SK-N-SH (cell line): ENCODE measurements at regions of chr15 and their contacts with region 1.

Region 1: DNA sequence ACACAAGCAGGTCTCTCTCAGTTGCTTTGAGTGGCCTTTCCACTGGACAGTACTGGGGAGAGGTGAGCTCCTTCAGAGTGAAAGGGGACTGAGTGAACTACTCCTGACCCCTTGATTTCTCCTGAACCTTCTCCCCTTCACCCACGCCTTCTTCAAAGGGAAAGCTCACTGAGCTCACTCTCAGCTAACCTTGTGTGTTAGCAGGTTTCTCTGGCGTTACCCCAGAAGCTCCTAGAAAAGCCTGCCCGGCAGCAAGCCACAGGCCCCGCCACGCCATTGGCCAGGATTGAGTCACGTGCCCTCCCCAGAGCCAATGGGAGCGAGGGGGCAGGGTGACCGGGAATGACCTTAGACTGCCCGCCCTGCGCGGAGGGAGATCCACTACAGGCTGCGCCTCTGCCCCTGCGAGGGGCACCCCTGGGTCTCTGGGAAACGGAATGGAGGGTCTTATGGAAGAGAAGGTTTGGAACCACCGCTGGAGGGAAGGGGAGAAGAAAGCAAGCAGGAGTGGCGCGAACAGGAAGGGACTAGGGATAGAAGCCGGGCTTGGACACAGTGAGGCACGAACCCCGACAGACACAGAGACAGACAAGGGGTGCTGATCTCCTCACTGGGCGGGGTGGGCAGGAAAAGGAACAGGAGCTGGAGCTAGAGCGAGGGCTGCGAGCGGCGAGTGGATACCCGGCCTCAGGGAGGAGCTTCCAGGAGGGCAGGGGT is 17.4 kb upstream of the CLK3 start:
- DNase-seq: peak; percentile 99
- H3K4me3 ChIP-seq: peak overlapping the region; percentile 57 to 70
- H3K27ac ChIP-seq: peak overlapping the region; percentile 40 to 97; a peak in 3 of 4 replicates
- H3K4me1 ChIP-seq: peaks cover 0 to 27% of the 10 kb centered on the region in 2 experiments; a peak in 1 of 4 replicates
- H3K27me3 ChIP-seq: no peaks in the 10 kb centered on the region
- CTCF ChIP-seq: no peak
- EP300 ChIP-seq: peak in 1 of 2 experiments; percentile 78; a peak in 2 of 4 replicates
- RAD21 ChIP-seq: no peak

Region 2: GRCh38 chr15:74464216-74464615 is 134.1 kb before region 1 on chr15:
- CTCF ChIA-PET with region 1: no interaction called
- POLR2A ChIA-PET with region 1: no interaction called
- DNase-seq: no peak
- H3K4me3 ChIP-seq: no peak overlapping the region
- H3K27ac ChIP-seq: no peak overlapping the region
- H3K4me1 ChIP-seq: peaks cover 0 to 6% of the 10 kb centered on the region in 2 experiments; a peak in 1 of 4 replicates
- H3K27me3 ChIP-seq: no peaks in the 10 kb centered on the region
- CTCF ChIP-seq: no peak
- EP300 ChIP-seq: no peak
- RAD21 ChIP-seq: no peak

Region 3: DNA sequence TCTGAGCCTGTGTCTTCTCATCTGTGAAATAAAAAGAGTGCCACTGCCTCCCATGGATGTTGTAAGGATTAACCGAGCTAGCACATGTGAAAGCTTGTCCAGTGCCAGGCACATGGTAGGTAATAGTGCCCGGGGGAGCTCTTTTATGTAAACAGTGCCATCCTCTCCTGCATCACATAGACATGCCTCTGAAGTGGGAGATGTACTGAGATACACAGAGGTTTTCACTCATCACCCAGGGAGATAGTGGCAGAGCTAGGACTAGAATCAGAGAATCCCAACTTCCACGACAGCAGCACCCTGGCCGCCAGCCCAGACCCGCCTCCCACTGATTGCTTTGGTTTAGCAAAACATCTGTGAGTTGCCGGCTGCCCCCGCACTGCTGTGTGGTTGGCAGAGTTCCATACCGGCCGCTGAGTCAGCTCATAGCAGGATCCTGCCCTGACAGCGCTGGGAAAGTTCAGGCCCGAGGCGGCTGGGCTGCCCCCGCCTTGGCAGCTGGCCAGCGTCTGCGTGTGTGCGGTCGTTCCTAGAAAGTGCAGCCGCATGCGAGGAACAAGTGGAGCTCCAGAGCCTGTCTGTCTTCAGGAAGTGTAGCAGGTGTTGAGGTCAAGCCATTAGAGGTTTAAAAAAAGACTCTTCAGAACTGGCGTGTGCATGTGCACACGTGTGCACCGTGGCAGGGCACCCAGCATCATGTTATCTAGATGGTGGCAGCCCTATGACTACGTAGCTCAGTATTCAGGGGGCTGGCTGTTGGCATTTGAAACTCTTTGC is 52.2 kb before region 1 on chr15:
- CTCF ChIA-PET with region 1: interaction called, 3 read pairs
- POLR2A ChIA-PET with region 1: interaction called, 14 read pairs
- DNase-seq: peak; percentile 94
- H3K4me3 ChIP-seq: peak overlapping the region in 1 of 2 experiments; percentile 9; a peak in 1 of 4 replicates
- H3K27ac ChIP-seq: peak overlapping the region; percentile 35 to 77; a peak in 3 of 4 replicates
- H3K4me1 ChIP-seq: peaks cover 13 to 26% of the 10 kb centered on the region in 2 experiments
- H3K27me3 ChIP-seq: no peaks in the 10 kb centered on the region
- CTCF ChIP-seq: no peak
- EP300 ChIP-seq: peak; percentile 80 to 85; a peak in 3 of 4 replicates
- RAD21 ChIP-seq: peak; percentile 43

Region 4: DNA sequence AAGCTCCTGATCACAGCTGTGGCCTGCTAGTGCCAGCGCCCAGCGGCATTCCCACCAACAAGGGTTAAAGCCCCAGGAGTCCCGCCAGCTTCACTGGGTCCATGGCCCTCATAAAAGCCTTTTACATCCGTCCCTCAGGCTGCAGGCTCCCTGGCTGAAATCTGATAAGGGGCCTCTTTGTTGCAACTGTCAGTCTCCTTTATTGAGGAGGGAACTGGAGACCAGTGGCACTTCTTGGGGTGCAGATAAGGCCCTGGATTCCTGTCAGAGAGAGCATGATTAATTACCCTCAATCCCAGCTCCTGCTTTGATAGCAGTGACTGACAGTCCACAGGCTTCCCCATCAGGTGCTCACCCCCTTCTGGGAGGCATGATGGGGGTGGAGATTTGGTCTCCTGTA is 13.5 kb before region 1 on chr15:
- CTCF ChIA-PET with region 1: interaction called, 4 read pairs
- POLR2A ChIA-PET with region 1: interaction called, 10 read pairs
- DNase-seq: peak; percentile 89
- H3K4me3 ChIP-seq: no peak overlapping the region
- H3K27ac ChIP-seq: peak overlapping the region in 1 of 2 experiments; percentile 87; a peak in 2 of 4 replicates
- H3K4me1 ChIP-seq: peaks cover 4 to 33% of the 10 kb centered on the region in 2 experiments; a peak in 3 of 4 replicates
- H3K27me3 ChIP-seq: no peaks in the 10 kb centered on the region
- CTCF ChIP-seq: no peak
- EP300 ChIP-seq: peak in 1 of 2 experiments; percentile 79; a peak in 2 of 4 replicates
- RAD21 ChIP-seq: no peak

Region 5: DNA sequence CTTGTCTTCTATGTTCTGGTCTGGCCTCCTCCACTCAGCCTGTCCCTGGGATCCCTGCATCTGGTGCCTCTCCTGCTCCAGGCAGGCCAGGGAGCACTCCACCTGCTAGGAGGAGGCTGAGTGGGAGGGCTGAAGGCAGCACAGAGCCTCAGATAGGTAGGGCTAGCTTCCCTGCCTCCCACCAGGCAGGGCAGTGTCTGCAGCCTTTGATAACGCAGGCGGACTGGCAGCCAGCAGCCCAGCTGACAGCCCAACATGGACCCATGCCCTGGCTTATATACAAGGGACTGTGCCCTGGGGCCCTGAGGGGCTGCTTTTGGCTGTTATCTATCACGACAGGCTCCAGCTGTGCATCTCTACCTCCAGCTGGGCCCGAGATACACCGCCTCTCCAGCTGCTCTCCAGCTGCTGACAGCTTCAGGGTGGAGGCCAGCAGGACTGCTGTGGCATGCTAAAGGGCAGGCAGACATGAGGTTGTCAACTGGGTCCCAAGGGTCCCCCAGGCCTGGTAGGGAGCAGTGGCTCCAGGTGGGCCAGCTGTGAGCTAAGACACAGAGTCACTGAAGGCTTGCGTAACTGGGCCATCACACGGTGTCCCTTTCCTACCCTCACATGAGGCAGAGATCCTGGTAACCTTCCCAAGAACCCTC is 12.1 kb after region 1 on chr15:
- CTCF ChIA-PET with region 1: interaction called, 4 read pairs
- POLR2A ChIA-PET with region 1: interaction called, 25 read pairs
- DNase-seq: peak; percentile 85
- H3K4me3 ChIP-seq: no peak overlapping the region
- H3K27ac ChIP-seq: peak overlapping the region in 1 of 2 experiments; percentile 84; a peak in 2 of 4 replicates
- H3K4me1 ChIP-seq: peaks cover 0 to 33% of the 10 kb centered on the region in 2 experiments; a peak in 2 of 4 replicates
- H3K27me3 ChIP-seq: no peaks in the 10 kb centered on the region
- CTCF ChIP-seq: no peak
- EP300 ChIP-seq: peak in 1 of 2 experiments; percentile 72; a peak in 2 of 4 replicates
- RAD21 ChIP-seq: 0 out of 2 replicates have a peak, but pooled peaks have one; percentile 5

Region 6: GRCh38 chr15:74615508-74616365 is 17.5 kb after region 1 on chr15 and contains the start of gene CLK3:
- CTCF ChIA-PET with region 1: interaction called, 4 read pairs
- POLR2A ChIA-PET with region 1: interaction called, 25 read pairs
- DNase-seq: peak; percentile 99
- H3K4me3 ChIP-seq: peak within 1 kb of the TSS; percentile 98 to 99
- H3K27ac ChIP-seq: peak within 1 kb of the TSS; percentile 92 to 95
- H3K4me1 ChIP-seq: peaks cover 0 to 28% of the 10 kb centered on the region in 2 experiments; a peak in 2 of 4 replicates
- H3K27me3 ChIP-seq: no peaks in the 10 kb centered on the region
- CTCF ChIP-seq: no peak
- EP300 ChIP-seq: peak in 1 of 2 experiments; percentile 49; a peak in 1 of 4 replicates
- RAD21 ChIP-seq: no peak
- polyA plus RNA-seq, gene CLK3: 67.7 and 72.4 TPM in 2 replicates